ENCODE measurements at regions of chr10 and their contacts with region 1.

Region 1: GRCh38 chr10:91227576-91227975 is 7.1 kb downstream of the PCGF5 start:
- DNase-seq: no peak
- CTCF ChIP-seq: no peak

Region 2: GRCh38 chr10:91242940-91243339 is 15.4 kb after region 1 on chr10:
- CTCF ChIA-PET with region 1: interaction called, 11 read pairs
- POLR2A ChIA-PET with region 1: no interaction called
- DNase-seq: no peak
- CTCF ChIP-seq: no peak

Region 3: GRCh38 chr10:91632671-91633550 is 405.3 kb after region 1 on chr10 and contains the start of gene PPP1R3C:
- CTCF ChIA-PET with region 1: no interaction called
- POLR2A ChIA-PET with region 1: no interaction called
- DNase-seq: peak; percentile 73
- CTCF ChIP-seq: peak; percentile 3